CD4-positive, alpha-beta memory T cell (primary cell): ENCODE measurements at regions of chr5 and their contacts with region 1.

Region 1: GRCh38 chr5:150700594-150701293 is at the start of gene RBM22:
- DNase-seq: peak; percentile 90 to 95 (median 91)
- H3K4me3 ChIP-seq: peak within 1 kb of the TSS; percentile 92 to 93
- H3K4me3 Mint-ChIP-seq: peak within 1 kb of the TSS in 1 of 8 donors; percentile 60
- H3K27ac ChIP-seq: peak within 1 kb of the TSS; percentile 94
- H3K27ac Mint-ChIP-seq: peak within 1 kb of the TSS in 1 of 7 donors; percentile 84
- H3K4me1 ChIP-seq: peaks cover 23% of the 10 kb centered on the region
- H3K4me1 Mint-ChIP-seq: peaks cover 0 to 12% (median 4%) of the 10 kb centered on the region in 4 donors
- H3K27me3 ChIP-seq: no peaks in the 10 kb centered on the region
- H3K27me3 Mint-ChIP-seq: no peaks in the 10 kb centered on the region
- total RNA-seq, gene RBM22: 91.0 to 91.2 TPM

Region 2: GRCh38 chr5:150357326-150358260 is 343.2 kb before region 1 on chr5 and contains the start of gene TCOF1:
- CTCF ChIA-PET with region 1: no interaction called
- POLR2A ChIA-PET with region 1: interaction called, 4 read pairs
- intact Hi-C with region 1: loop called (anchors 1 kb)
- DNase-seq: peak; percentile 94 to 97 (median 96)
- H3K4me3 ChIP-seq: peak within 1 kb of the TSS; percentile 66 to 76
- H3K4me3 Mint-ChIP-seq: peak within 1 kb of the TSS; percentile 88 to 93 (median 91)
- H3K27ac ChIP-seq: peak within 1 kb of the TSS; percentile 70
- H3K27ac Mint-ChIP-seq: peak within 1 kb of the TSS; percentile 68 to 98 (median 94)
- H3K4me1 ChIP-seq: peaks cover 28% of the 10 kb centered on the region
- H3K4me1 Mint-ChIP-seq: peaks cover 30 to 59% (median 41%) of the 10 kb centered on the region in 4 donors
- H3K27me3 ChIP-seq: no peaks in the 10 kb centered on the region
- H3K27me3 Mint-ChIP-seq: peaks cover 0 to 1% of the 10 kb centered on the region in 2 donors
- total RNA-seq, gene TCOF1: 53.8 to 59.9 TPM

Region 3: DNA sequence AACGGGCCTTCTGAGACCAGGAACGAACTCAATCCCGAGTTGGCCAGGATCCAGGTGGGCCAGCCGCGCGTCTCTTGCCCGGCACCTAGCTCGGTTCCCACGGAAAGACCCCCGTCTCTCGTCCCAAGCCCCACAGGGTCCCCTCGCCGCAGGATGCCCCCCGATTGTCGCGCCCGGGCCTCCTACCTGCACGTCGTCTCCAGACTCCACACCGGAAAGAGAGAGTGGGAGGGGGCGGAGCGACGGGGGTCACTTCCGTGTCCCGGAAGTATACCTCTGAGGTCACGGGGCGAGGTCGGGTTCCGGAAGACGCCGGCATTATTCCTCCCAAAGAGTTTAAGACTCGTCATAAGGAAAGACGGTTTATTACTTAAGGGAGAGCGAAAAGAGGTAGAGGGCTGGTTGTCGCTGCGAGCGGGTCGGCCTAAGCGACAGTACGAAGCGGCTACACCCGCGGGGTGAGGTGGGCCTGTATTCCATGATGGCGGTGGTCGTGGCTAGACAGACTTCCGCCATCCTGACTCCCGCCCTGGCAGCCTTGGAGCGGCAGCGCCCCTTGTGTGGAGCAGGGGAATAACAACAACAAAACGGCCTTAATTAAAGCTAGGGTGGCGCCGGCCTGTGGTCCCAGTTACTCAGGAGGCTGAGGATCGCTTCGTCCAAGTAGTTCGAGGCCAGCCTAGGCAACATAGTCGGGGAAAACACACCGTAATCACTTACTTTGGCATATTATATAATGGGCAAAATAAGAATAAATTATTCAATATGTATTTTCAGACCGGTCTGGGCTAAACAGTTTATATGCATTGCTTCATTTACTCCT is 251.0 kb before region 1 on chr5 and contains the start of gene RPS14:
- CTCF ChIA-PET with region 1: interaction called, 9 read pairs
- POLR2A ChIA-PET with region 1: interaction called, 36 read pairs
- intact Hi-C with region 1: loop called (anchors 1 kb)
- DNase-seq: peak; percentile 96 to 98 (median 97)
- H3K4me3 ChIP-seq: peak within 1 kb of the TSS; percentile 87 to 99
- H3K4me3 Mint-ChIP-seq: peak within 1 kb of the TSS; percentile 92 to 100 (median 98)
- H3K27ac ChIP-seq: peak within 1 kb of the TSS; percentile 99
- H3K27ac Mint-ChIP-seq: peak within 1 kb of the TSS; percentile 99 to 100 (median 100)
- H3K4me1 ChIP-seq: peaks cover 28% of the 10 kb centered on the region
- H3K4me1 Mint-ChIP-seq: peaks cover 15 to 46% (median 36%) of the 10 kb centered on the region in 4 donors
- H3K27me3 ChIP-seq: no peaks in the 10 kb centered on the region
- H3K27me3 Mint-ChIP-seq: no peaks in the 10 kb centered on the region
- total RNA-seq, gene RPS14: 5,260 to 5,575 TPM

Region 4: GRCh38 chr5:150497274-150497988 is 203.3 kb before region 1 on chr5:
- CTCF ChIA-PET with region 1: no interaction called
- POLR2A ChIA-PET with region 1: no interaction called
- intact Hi-C with region 1: no loop called
- DNase-seq: no peak
- H3K4me3 ChIP-seq: no peak overlapping the region
- H3K4me3 Mint-ChIP-seq: no peak overlapping the region
- H3K27ac ChIP-seq: no peak overlapping the region
- H3K27ac Mint-ChIP-seq: no peak overlapping the region
- H3K4me1 ChIP-seq: no peaks in the 10 kb centered on the region
- H3K4me1 Mint-ChIP-seq: no peaks in the 10 kb centered on the region
- H3K27me3 ChIP-seq: no peaks in the 10 kb centered on the region
- H3K27me3 Mint-ChIP-seq: no peaks in the 10 kb centered on the region

Region 5: DNA sequence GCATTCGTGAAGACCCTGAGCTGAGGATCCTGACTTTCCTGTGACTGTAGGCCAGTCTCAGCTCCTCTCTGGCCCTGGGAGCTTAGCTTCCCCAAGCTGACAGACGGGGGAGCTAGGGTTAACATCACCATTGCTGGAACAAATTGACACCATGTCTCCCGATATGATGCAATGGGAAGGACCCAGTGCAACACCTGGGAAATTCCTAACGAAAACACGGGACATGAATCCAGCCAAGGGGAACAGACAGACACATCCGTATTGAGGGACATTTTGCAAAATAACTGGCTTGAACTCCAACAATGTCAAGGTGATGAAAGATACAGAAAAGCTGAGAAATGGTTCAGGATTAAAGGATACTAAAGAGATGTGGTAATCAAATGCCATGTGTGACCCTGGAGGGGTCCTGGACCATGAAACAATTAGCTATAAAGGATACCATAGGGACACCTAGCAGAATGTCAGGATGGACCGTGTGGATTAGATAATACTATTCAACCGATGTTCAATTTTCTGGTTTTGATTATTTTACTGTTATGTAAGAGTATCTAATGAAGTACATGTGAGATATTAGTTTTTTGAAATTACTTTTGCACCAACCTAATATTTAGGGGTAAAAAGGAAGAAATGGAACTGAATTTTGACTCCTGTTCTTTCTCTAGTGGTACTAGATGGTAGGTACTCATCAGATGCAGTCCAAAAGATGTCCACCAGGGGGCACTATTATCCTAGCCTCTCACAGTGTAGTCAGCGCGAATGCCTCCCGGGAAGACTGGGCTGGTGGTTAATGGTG is 140.1 kb before region 1 on chr5:
- CTCF ChIA-PET with region 1: interaction called, 8 read pairs
- POLR2A ChIA-PET with region 1: no interaction called
- intact Hi-C with region 1: loop called (anchors 5 kb)
- DNase-seq: peak; percentile 73 to 82 (median 79)
- H3K4me3 ChIP-seq: no peak overlapping the region
- H3K4me3 Mint-ChIP-seq: no peak overlapping the region
- H3K27ac ChIP-seq: no peak overlapping the region
- H3K27ac Mint-ChIP-seq: no peak overlapping the region
- H3K4me1 ChIP-seq: no peaks in the 10 kb centered on the region
- H3K4me1 Mint-ChIP-seq: peaks cover 0 to 1% (median under 1%) of the 10 kb centered on the region in 4 donors
- H3K27me3 ChIP-seq: no peaks in the 10 kb centered on the region
- H3K27me3 Mint-ChIP-seq: peaks cover 0 to 3% of the 10 kb centered on the region in 2 donors

Region 6: DNA sequence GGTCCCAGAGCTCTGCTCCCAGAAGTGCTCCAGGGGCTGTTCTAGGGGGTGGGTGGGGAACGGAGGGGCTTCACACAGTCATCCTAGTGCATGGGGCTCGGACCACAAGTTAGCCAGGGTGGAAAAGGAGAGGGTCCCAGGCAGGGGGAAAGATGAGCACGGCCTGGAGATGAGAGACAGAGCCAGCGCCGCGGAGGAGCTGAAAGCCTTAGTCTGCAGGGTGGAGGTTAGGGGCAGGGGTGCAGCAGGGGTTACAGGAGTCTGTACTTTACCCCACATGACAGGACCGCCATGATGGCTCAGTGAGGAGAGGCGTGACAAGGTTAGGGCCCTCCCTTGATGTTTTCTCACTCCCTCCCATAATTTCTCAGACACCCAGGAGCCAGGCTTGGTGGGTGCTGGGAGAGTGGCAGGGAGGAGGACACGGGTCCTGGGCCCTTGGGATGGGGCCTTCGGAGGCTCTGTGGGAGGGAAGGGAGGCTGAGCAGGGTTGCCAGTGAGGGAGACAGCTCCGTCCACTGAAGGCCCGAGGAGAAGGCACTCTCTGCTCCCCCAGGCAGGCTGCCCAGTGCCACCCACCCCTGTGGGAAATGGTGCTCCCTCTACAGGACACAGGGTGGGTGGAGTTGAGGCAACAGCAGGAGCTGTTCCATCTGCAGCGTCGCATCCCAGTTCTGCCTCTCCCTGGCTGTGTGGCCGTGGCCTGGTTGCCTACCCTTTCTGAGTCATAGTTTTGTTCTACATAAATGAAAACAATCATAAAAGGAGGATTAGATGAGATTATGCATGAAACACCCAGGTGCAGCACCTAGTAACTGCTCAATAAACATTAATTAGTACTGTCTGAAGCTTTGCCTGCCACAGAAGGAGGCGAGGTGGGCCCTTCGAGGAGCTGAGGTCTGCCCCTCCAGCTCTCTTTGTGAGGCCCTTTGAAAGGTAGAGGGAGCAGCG is 126.6 kb before region 1 on chr5:
- CTCF ChIA-PET with region 1: no interaction called
- POLR2A ChIA-PET with region 1: no interaction called
- intact Hi-C with region 1: no loop called
- DNase-seq: no peak
- H3K4me3 ChIP-seq: no peak overlapping the region
- H3K4me3 Mint-ChIP-seq: no peak overlapping the region
- H3K27ac ChIP-seq: no peak overlapping the region
- H3K27ac Mint-ChIP-seq: no peak overlapping the region
- H3K4me1 ChIP-seq: no peaks in the 10 kb centered on the region
- H3K4me1 Mint-ChIP-seq: no peaks in the 10 kb centered on the region
- H3K27me3 ChIP-seq: no peaks in the 10 kb centered on the region
- H3K27me3 Mint-ChIP-seq: no peaks in the 10 kb centered on the region

Region 7: DNA sequence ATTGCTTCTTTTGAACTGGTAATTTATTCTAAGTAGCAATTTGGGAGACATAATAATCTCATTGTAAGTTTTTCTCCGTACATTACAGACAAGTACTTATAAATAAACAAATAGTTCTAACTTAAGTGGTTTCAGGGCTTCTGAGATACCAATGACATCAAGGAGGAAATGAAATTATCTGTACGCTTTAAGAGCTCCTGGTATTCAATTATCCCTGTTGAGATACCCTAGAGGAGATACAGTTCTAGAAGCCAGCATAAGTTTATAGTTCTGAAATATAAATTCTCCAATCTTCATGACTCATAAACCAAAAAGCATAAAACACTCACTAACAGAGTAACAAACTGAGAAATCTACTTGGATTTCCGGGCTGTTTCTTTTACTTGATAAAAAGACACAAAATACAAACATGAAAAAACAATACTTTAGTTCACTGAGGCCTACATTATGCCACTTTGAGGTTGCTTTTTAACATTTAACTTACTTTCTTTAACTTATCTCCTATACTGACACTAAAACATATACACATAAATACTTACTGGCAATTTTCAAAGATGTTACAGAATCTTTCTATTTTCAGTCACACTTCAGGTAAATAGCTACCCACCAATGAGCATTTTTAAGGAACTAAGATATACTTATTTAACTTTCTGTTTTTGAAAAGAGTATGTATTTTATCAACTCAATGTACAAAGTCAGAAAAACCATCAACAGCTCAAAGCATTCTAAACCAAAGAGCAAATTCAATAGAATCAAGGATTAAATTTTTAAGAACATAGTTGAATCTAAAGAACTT is 50.5 kb after region 1 on chr5:
- CTCF ChIA-PET with region 1: interaction called, 10 read pairs
- POLR2A ChIA-PET with region 1: interaction called, 11 read pairs
- intact Hi-C with region 1: no loop called
- DNase-seq: no peak
- H3K4me3 ChIP-seq: no peak overlapping the region
- H3K4me3 Mint-ChIP-seq: peak overlapping the region in 1 of 8 donors; percentile 2
- H3K27ac ChIP-seq: no peak overlapping the region
- H3K27ac Mint-ChIP-seq: peak overlapping the region in 4 of 7 donors; percentile 32 to 68 (median 39)
- H3K4me1 ChIP-seq: peaks cover 36% of the 10 kb centered on the region
- H3K4me1 Mint-ChIP-seq: peaks cover 40 to 55% (median 48%) of the 10 kb centered on the region in 4 donors
- H3K27me3 ChIP-seq: no peaks in the 10 kb centered on the region
- H3K27me3 Mint-ChIP-seq: no peaks in the 10 kb centered on the region

Region 8: DNA sequence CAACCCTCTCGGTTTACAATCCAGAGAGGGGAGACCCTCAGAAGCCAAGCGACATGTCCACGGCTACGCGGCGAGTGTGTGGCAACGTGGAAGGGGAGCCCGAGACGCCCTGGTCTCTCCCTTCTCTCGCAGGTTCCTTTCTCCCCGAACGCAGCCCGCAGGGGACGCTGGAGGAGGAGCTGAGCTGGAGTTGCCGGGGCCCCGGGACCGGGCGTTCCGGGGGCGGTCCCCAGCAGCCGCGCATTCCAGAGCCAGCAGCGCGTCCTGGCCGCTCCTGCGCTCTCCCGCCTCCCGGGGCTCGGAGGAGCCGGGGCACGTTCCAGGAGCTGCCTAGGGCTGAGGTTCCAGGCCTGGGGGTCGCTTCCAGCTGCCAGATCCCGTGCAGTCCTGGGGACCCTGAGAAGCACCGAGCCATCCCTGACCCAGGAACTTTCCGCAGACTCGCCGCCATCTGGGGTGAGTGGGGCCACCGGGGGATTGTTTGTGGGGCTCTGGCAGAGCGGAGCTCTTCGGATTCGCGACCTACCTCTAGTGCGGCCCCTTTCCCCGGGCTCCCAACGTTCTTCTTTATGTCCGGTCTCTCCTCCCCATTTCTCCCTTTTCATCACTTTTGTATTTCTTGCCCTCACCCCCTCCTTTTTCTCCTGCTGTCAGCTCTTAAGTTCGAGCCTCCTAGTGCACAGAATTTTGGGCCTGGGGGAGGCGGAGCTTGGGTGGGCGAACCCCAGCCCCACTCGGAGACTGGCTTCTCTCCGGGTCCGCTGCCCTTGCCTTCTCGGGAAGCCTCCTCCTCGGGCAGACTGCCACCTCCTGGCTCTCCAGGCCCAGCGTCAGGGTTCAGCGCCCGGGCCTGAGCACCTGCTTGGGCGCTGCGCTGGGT is 78.0 kb after region 1 on chr5 and contains the start of gene SMIM3:
- CTCF ChIA-PET with region 1: interaction called, 71 read pairs
- POLR2A ChIA-PET with region 1: interaction called, 53 read pairs
- intact Hi-C with region 1: loop called (anchors 1 kb)
- DNase-seq: peak; percentile 59 to 70 (median 65)
- H3K4me3 ChIP-seq: peak within 1 kb of the TSS; percentile 67 to 77
- H3K4me3 Mint-ChIP-seq: peak within 1 kb of the TSS; percentile 97 to 99 (median 98)
- H3K27ac ChIP-seq: peak within 1 kb of the TSS; percentile 60
- H3K27ac Mint-ChIP-seq: peak within 1 kb of the TSS; percentile 93 to 99 (median 96)
- H3K4me1 ChIP-seq: peaks cover 52% of the 10 kb centered on the region
- H3K4me1 Mint-ChIP-seq: peaks cover 36 to 61% (median 52%) of the 10 kb centered on the region in 4 donors
- H3K27me3 ChIP-seq: no peaks in the 10 kb centered on the region
- H3K27me3 Mint-ChIP-seq: no peaks in the 10 kb centered on the region
- total RNA-seq, gene SMIM3: 7.9 to 8.0 TPM

Region 9: DNA sequence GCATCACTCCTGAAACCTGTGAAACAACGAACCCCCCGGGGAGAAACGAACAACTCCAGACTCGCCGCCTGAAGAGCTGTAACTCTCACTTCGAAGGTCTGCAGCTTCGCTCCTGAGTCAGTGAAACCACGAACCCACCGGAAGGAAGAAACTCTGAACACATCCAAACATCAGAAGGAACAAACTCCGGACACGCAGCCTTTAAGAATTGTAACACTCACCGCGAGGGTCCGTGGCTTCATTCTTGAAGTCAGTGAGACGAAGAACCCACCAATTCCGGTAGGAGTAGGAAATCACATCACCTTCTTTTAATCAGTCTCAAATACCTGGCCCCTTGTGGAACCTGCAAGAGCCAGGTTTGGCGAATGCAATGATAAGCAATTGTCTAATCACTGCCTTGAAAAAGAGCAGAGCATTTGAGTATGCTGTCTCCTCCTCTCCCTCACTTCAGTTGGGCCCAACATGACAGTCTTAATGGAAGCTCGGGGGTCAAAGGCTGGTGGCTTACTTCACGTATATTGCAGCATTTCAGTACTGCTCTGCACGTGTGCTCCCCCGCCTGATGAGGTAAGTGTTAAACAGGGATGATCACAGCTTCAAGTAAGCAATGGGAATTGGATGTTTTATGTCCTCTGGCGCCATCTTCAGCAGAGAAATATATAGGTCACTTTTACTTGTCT is 146.1 kb after region 1 on chr5:
- CTCF ChIA-PET with region 1: interaction called, 34 read pairs
- POLR2A ChIA-PET with region 1: interaction called, 20 read pairs
- intact Hi-C with region 1: loop called (anchors 1 kb)
- DNase-seq: peak; percentile 76 to 85 (median 77)
- H3K4me3 ChIP-seq: peak overlapping the region in 1 of 2 donors; percentile 40
- H3K4me3 Mint-ChIP-seq: peak overlapping the region; percentile 83 to 91 (median 86)
- H3K27ac ChIP-seq: peak overlapping the region; percentile 50
- H3K27ac Mint-ChIP-seq: peak overlapping the region; percentile 76 to 95 (median 92)
- H3K4me1 ChIP-seq: peaks cover 8% of the 10 kb centered on the region
- H3K4me1 Mint-ChIP-seq: peaks cover 16 to 33% (median 26%) of the 10 kb centered on the region in 4 donors
- H3K27me3 ChIP-seq: no peaks in the 10 kb centered on the region
- H3K27me3 Mint-ChIP-seq: no peaks in the 10 kb centered on the region